Ascending aorta (tissue), 2 donors: ENCODE measurements at regions of chr9 and their contacts with region 1.

Region 1: DNA sequence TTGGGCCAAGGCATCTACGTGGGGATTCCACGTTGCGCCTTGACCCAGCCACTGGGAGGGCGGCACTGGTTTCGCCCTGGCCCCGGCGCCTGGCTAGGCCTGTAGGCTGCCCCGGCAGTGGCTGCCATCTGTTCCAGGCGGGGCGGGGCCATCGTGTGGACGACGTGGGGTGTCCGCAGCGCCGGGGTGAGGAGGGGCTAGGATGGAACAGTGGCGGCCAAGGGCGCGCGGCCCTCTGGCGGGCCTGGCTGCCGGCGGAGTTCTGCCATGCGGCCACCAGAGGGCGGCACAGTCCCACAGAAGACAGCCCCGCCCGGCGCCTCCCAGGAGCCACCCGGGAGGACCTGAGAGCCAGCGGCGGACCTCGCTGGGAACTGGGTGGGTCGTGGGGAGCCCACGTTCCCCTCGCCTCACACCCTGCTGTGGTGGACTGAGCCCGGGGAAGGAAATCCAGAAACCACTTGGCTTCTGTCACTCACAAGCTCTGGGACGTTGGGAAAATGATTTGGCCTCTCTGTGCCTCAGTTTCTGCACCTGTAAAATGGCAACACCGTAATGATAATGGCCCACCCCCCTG is 22.6 kb upstream of the RAPGEF1 start:
- DNase-seq: peak in 1 of 2 donors; percentile 79
- H3K4me3 ChIP-seq: peak overlapping the region in 1 of 2 donors; percentile 28
- H3K27ac ChIP-seq: no peak overlapping the region
- H3K4me1 ChIP-seq: peaks cover 0 to 4% of the 10 kb centered on the region in 2 donors
- H3K27me3 ChIP-seq: no peaks in the 10 kb centered on the region
- CTCF ChIP-seq: peak; percentile 91 to 97 (median 95)

Region 2: GRCh38 chr9:132249123-132249522 is 486.7 kb after region 1 on chr9:
- intact Hi-C with region 1: loop called (anchors 1 kb)
- DNase-seq: peak in 1 of 2 donors; percentile 47
- H3K4me3 ChIP-seq: no peak overlapping the region
- H3K27ac ChIP-seq: no peak overlapping the region
- H3K4me1 ChIP-seq: no peaks in the 10 kb centered on the region
- H3K27me3 ChIP-seq: no peaks in the 10 kb centered on the region
- CTCF ChIP-seq: no peak

Region 3: GRCh38 chr9:132268725-132269352 is 506.4 kb after region 1 on chr9:
- intact Hi-C with region 1: loop called (anchors 1 kb)
- DNase-seq: peak in 1 of 2 donors; percentile 72
- H3K4me3 ChIP-seq: no peak overlapping the region
- H3K27ac ChIP-seq: no peak overlapping the region
- H3K4me1 ChIP-seq: no peaks in the 10 kb centered on the region
- H3K27me3 ChIP-seq: no peaks in the 10 kb centered on the region
- CTCF ChIP-seq: peak; percentile 58 to 82 (median 75)

Region 4: GRCh38 chr9:133539991-133540697 is 1777.7 kb after region 1 on chr9:
- intact Hi-C with region 1: no loop called
- DNase-seq: no peak
- H3K4me3 ChIP-seq: peak overlapping the region in 1 of 2 donors; percentile 53
- H3K27ac ChIP-seq: no peak overlapping the region
- H3K4me1 ChIP-seq: peaks cover 0 to under 1% of the 10 kb centered on the region in 2 donors
- H3K27me3 ChIP-seq: no peaks in the 10 kb centered on the region
- CTCF ChIP-seq: no peak